ENCODE measurements at regions of chr12 and their contacts with region 1.

Region 1: GRCh38 chr12:53984901-53985709 is at the start of gene HOXC10:
- DNase-seq: peak; percentile 57 to 65
- H3K4me3 ChIP-seq: peak within 1 kb of the TSS in 1 of 3 donors; percentile 0
- H3K27ac ChIP-seq: no peak within 1 kb of the TSS
- H3K4me1 ChIP-seq: peaks cover 17 to 18% of the 10 kb centered on the region in 2 donors
- H3K27me3 ChIP-seq: peaks cover 89% of the 10 kb centered on the region
- CTCF ChIP-seq: peak in 3 of 6 experiments; percentile 12 to 38 (median 27)
- POLR2A ChIP-seq: no peak
- total RNA-seq, gene HOXC10: not detected

Region 2: DNA sequence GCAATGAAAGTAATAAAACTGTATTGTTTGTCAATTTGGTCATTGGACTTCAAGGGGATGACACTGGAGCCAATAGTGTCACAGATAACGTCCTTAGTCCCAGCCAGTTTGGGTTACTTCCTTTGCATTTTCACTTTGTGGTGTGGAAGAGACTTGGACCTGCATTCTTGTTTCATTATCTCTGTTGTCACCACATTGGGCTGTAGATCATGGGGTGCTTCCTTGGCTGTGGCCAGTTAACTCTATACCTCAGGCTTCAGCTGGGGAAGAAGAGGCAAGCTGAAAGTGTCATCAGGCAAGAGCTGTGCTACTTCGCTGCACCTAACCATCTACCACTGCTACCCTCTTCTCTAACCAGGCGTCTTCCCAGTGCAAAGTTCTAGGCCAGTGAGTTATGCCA is 218.2 kb before region 1 on chr12:
- intact Hi-C with region 1: loop called (anchors 10 kb)
- DNase-seq: no peak
- H3K4me3 ChIP-seq: no peak overlapping the region
- H3K27ac ChIP-seq: no peak overlapping the region
- H3K4me1 ChIP-seq: no peaks in the 10 kb centered on the region
- H3K27me3 ChIP-seq: no peaks in the 10 kb centered on the region
- CTCF ChIP-seq: no peak
- POLR2A ChIP-seq: no peak